Activated CD4-positive, alpha-beta memory T cell treated with anti-CD3 and anti-CD28 coated beads for 36 hours (primary cell): ENCODE measurements at regions of chr20 and their contacts with region 1.

Region 1: DNA sequence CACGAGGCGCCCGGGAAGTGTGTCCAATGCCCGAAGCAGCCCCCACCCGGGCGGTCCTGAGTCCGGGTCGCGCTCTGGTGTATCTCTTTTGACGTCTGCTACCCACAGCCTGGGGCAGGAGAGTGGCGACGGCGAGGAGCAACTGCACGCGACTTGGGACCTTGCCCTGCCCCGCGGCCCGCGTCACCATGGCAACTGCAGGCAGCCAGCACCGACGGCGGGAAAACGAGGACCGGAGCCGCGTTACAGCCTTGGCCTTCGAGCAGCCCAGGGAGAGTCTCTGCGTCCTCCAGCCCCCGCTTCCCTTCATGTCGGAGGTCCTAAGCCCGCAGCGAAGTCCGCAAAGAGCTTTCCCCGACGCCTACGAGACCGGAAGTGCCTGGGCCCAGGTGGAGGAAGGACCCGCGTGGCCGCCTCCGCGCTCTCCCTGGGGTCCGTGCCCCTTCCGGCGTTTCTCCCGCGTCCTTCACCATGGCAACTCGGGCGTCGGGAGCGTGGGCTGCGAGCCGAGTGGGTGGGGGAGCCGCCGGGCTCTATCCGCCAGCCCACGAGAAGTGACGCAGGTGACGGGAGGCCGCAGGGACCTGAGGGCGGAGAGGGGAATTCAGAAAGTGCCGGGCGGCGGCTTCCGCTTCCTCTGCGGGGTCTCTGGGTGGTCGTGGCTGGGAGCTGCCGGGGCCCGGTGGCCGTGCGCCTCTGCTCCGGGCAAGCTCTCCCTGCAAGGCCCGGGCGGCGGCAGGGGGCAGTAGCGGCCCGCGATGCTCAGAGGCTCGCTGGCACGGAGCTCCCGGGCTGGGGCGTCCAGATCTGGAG is 88.6 kb upstream of the TGM3 start:
- DNase-seq: peak; percentile 77
- H3K4me3 Mint-ChIP-seq: peak overlapping the region; percentile 74
- H3K27ac Mint-ChIP-seq: no peak overlapping the region
- H3K4me1 Mint-ChIP-seq: peaks cover 7% of the 10 kb centered on the region
- H3K27me3 Mint-ChIP-seq: peaks cover 7% of the 10 kb centered on the region

Region 2: GRCh38 chr20:2109425-2110210 is 97.5 kb before region 1 on chr20:
- CTCF ChIA-PET with region 1: no interaction called
- POLR2A ChIA-PET with region 1: no interaction called
- intact Hi-C with region 1: no loop called
- DNase-seq: no peak
- H3K4me3 Mint-ChIP-seq: no peak overlapping the region
- H3K27ac Mint-ChIP-seq: no peak overlapping the region
- H3K4me1 Mint-ChIP-seq: peaks cover 86% of the 10 kb centered on the region
- H3K27me3 Mint-ChIP-seq: no peaks in the 10 kb centered on the region

Region 3: GRCh38 chr20:2217857-2218539 is 10.8 kb after region 1 on chr20:
- CTCF ChIA-PET with region 1: interaction called, 20 read pairs
- POLR2A ChIA-PET with region 1: interaction called, 4 read pairs
- intact Hi-C with region 1: no loop called
- DNase-seq: peak; percentile 64
- H3K4me3 Mint-ChIP-seq: no peak overlapping the region
- H3K27ac Mint-ChIP-seq: peak overlapping the region; percentile 6
- H3K4me1 Mint-ChIP-seq: peaks cover 13% of the 10 kb centered on the region
- H3K27me3 Mint-ChIP-seq: peaks cover 5% of the 10 kb centered on the region

Region 4: GRCh38 chr20:2349818-2350508 is 142.8 kb after region 1 on chr20:
- CTCF ChIA-PET with region 1: interaction called, 8 read pairs
- POLR2A ChIA-PET with region 1: no interaction called
- intact Hi-C with region 1: loop called (anchors 2 kb)
- DNase-seq: no peak
- H3K4me3 Mint-ChIP-seq: no peak overlapping the region
- H3K27ac Mint-ChIP-seq: no peak overlapping the region
- H3K4me1 Mint-ChIP-seq: peaks cover 2% of the 10 kb centered on the region
- H3K27me3 Mint-ChIP-seq: peaks cover 21% of the 10 kb centered on the region